Mammary epithelial cell (primary cell): ENCODE measurements at regions of chr4 and their contacts with region 1.

Region 1: GRCh38 chr4:3106339-3107186 is 32.1 kb downstream of the HTT start:
- DNase-seq: peak; percentile 88
- H3K4me3 ChIP-seq: no peak overlapping the region
- H3K27ac ChIP-seq: peak overlapping the region; percentile 21
- H3K4me1 ChIP-seq: peaks cover 2% of the 10 kb centered on the region
- H3K27me3 ChIP-seq: no peaks in the 10 kb centered on the region
- CTCF ChIP-seq: peak; percentile 97 to 99

Region 2: GRCh38 chr4:3047464-3048286 is 58.9 kb before region 1 on chr4:
- CTCF ChIA-PET with region 1: no interaction called
- dilution Hi-C with region 1: no loop called
- in situ Hi-C with region 1: no loop called
- intact Hi-C with region 1: loop called (anchors 2 kb)
- DNase-seq: peak; percentile 31
- H3K4me3 ChIP-seq: no peak overlapping the region
- H3K27ac ChIP-seq: no peak overlapping the region
- H3K4me1 ChIP-seq: no peaks in the 10 kb centered on the region
- H3K27me3 ChIP-seq: no peaks in the 10 kb centered on the region
- CTCF ChIP-seq: peak; percentile 57 to 82

Region 3: GRCh38 chr4:3136453-3136852 is 29.9 kb after region 1 on chr4:
- CTCF ChIA-PET with region 1: no interaction called
- dilution Hi-C with region 1: no loop called
- in situ Hi-C with region 1: no loop called
- intact Hi-C with region 1: loop called (anchors 1 kb)
- DNase-seq: no peak
- H3K4me3 ChIP-seq: no peak overlapping the region
- H3K27ac ChIP-seq: no peak overlapping the region
- H3K4me1 ChIP-seq: no peaks in the 10 kb centered on the region
- H3K27me3 ChIP-seq: no peaks in the 10 kb centered on the region
- CTCF ChIP-seq: peak; percentile 9 to 26

Region 4: GRCh38 chr4:3346146-3346545 is 239.6 kb after region 1 on chr4:
- CTCF ChIA-PET with region 1: no interaction called
- dilution Hi-C with region 1: no loop called
- in situ Hi-C with region 1: loop called in 1 of 2 experiments (anchors 25 kb)
- intact Hi-C with region 1: loop called (anchors 1 kb)
- DNase-seq: peak; percentile 66
- H3K4me3 ChIP-seq: no peak overlapping the region
- H3K27ac ChIP-seq: no peak overlapping the region
- H3K4me1 ChIP-seq: no peaks in the 10 kb centered on the region
- H3K27me3 ChIP-seq: no peaks in the 10 kb centered on the region
- CTCF ChIP-seq: peak; percentile 79 to 92

Region 5: GRCh38 chr4:3480528-3481112 is 374.1 kb after region 1 on chr4:
- CTCF ChIA-PET with region 1: no interaction called
- dilution Hi-C with region 1: no loop called
- in situ Hi-C with region 1: no loop called
- intact Hi-C with region 1: loop called (anchors 2 kb)
- DNase-seq: peak; percentile 64
- H3K4me3 ChIP-seq: no peak overlapping the region
- H3K27ac ChIP-seq: no peak overlapping the region
- H3K4me1 ChIP-seq: peaks cover 28% of the 10 kb centered on the region
- H3K27me3 ChIP-seq: no peaks in the 10 kb centered on the region
- CTCF ChIP-seq: peak; percentile 98 to 99